ENCODE measurements at regions of chr18 and their contacts with region 1.

Region 1: GRCh38 chr18:62131301-62131909 is 55.5 kb downstream of the PIGN start:
- DNase-seq: peak; percentile 74
- ATAC-seq: peak; percentile 51
- H3K4me3 Mint-ChIP-seq: no peak overlapping the region
- H3K27ac Mint-ChIP-seq: no peak overlapping the region
- H3K4me1 Mint-ChIP-seq: no peaks in the 10 kb centered on the region
- H3K27me3 Mint-ChIP-seq: no peaks in the 10 kb centered on the region

Region 2: GRCh38 chr18:61581578-61582201 is 549.7 kb before region 1 on chr18:
- CTCF ChIA-PET with region 1: interaction called, 10 read pairs
- POLR2A ChIA-PET with region 1: no interaction called
- DNase-seq: peak; percentile 66
- ATAC-seq: peak; percentile 91
- H3K4me3 Mint-ChIP-seq: no peak overlapping the region
- H3K27ac Mint-ChIP-seq: no peak overlapping the region
- H3K4me1 Mint-ChIP-seq: no peaks in the 10 kb centered on the region
- H3K27me3 Mint-ChIP-seq: peaks cover 21% of the 10 kb centered on the region